ENCODE measurements at regions of chr19 and their contacts with region 1.

Region 1: DNA sequence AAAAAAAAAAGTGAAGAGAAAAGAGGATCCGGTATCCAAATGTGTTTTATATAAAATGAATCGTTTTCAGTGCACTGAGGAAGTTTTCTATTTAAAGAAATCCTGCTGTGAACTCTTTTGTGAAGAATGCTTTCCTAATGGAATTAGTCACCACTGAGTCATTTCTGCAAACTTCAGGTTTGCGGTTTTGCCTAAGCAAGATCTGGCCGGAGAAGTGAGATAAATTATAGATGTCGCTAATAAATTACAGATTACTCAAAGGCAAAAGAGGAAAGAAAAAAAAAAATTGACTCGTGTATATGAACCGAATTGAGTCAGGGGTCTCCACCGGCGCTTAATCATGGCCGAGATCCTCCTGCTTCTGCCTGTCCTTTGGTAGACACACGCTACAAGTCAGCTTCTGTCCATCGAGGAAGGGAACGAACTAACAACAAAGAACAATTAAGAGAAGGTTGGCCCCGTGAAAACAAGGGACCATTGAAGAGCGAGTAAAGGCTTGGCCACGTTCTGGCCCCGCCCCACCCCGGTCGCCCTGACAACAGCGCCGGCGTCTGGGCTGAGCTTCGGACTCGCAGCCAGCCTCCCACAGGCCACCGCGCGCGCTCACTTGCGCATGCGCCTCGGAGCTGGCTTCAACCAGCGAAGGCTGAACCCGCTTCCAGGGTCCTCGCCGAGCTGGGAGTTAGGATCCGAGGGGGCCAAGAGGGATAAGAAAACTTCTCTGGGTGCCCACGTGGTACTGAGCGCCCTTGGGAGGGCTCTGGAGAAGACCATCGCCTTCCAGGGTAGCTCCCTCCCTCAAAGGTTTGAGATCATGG is 33.0 kb upstream of the MRI1 start:
- DNase-seq: peak; percentile 97 to 98 (median 98)
- ATAC-seq: peak; percentile 100
- H3K4me3 ChIP-seq: peak overlapping the region; percentile 61
- H3K27ac ChIP-seq: peak overlapping the region; percentile 83
- H3K4me1 ChIP-seq: peaks cover 11 to 13% of the 10 kb centered on the region in 2 experiments
- H3K27me3 ChIP-seq: no peaks in the 10 kb centered on the region
- CTCF ChIP-seq: no peak
- EP300 ChIP-seq: no peak; the same call in 1 of the 2 replicates
- POLR2A ChIP-seq: peak; percentile 89
- RAD21 ChIP-seq: no peak; a peak in 1 of 4 replicates

Region 2: GRCh38 chr19:13748169-13748828 is 16.9 kb after region 1 on chr19:
- CTCF ChIA-PET with region 1: no interaction called
- POLR2A ChIA-PET with region 1: interaction called, 18 read pairs
- in situ Hi-C with region 1: no loop called
- intact Hi-C with region 1: no loop called
- DNase-seq: peak in 3 of 4 experiments; percentile 32 to 66 (median 46)
- ATAC-seq: peak; percentile 17; the same call in 2 of the 3 replicates
- H3K4me3 ChIP-seq: peak overlapping the region; percentile 71
- H3K27ac ChIP-seq: peak overlapping the region; percentile 75
- H3K4me1 ChIP-seq: peaks cover 7 to 22% of the 10 kb centered on the region in 2 experiments; a peak in 4 of 5 replicates
- H3K27me3 ChIP-seq: no peaks in the 10 kb centered on the region
- CTCF ChIP-seq: no peak
- EP300 ChIP-seq: no peak
- POLR2A ChIP-seq: no peak
- RAD21 ChIP-seq: no peak

Measured in K562 (cell line).